HCT116 (cell line): ENCODE measurements at regions of chr4 and their contacts with region 1.

Region 1: DNA sequence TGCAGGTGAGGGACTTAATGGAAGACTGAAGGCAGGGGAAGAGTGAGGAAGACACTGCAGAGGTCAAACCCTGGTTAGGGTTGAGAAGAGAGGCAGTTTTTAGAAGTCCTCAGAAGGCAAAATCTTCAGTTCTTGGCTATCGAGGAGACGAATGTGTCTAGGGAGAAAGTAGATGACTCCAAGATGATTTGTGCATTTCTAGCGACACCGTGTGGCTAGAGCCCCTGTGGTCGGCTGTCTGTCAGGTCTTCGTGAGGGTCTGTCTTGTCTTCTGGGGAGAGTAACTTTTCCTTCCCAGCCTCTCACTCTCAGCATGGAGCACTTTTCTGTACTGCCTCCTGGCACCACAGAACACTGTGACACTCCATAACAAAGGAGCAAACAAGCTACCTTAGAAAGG is 458.1 kb downstream of the STIM2 start:
- DNase-seq: peak; percentile 35
- ATAC-seq: peak; percentile 84
- H3K4me3 ChIP-seq: no peak overlapping the region
- H3K27ac ChIP-seq: no peak overlapping the region
- H3K4me1 ChIP-seq: no peaks in the 10 kb centered on the region
- H3K27me3 ChIP-seq: no peaks in the 10 kb centered on the region
- CTCF ChIP-seq: peak; percentile 33 to 59 (median 50); a peak in 4 of 6 replicates
- POLR2A ChIP-seq: no peak
- RAD21 ChIP-seq: peak; percentile 67

Region 2: GRCh38 chr4:27096142-27096824 is 222.5 kb before region 1 on chr4:
- CTCF ChIA-PET with region 1: no interaction called
- POLR2A ChIA-PET with region 1: no interaction called
- RAD21 ChIA-PET with region 1: no interaction called
- intact Hi-C with region 1: loop called (anchors 2 kb)
- DNase-seq: no peak
- ATAC-seq: no peak
- H3K4me3 ChIP-seq: no peak overlapping the region
- H3K27ac ChIP-seq: no peak overlapping the region
- H3K4me1 ChIP-seq: peaks cover 0 to 7% of the 10 kb centered on the region in 2 experiments; a peak in 1 of 4 replicates
- H3K27me3 ChIP-seq: peaks cover 14% of the 10 kb centered on the region; the same call in 1 of the 2 replicates
- CTCF ChIP-seq: peak in 1 of 3 experiments; percentile 28; a peak in 1 of 6 replicates
- POLR2A ChIP-seq: no peak
- RAD21 ChIP-seq: peak; percentile 54

Region 3: GRCh38 chr4:27176400-27176799 is 142.3 kb before region 1 on chr4:
- CTCF ChIA-PET with region 1: interaction called, 15 read pairs
- POLR2A ChIA-PET with region 1: no interaction called
- RAD21 ChIA-PET with region 1: interaction called in 1 of 2 experiments, 6 read pairs
- intact Hi-C with region 1: loop called (anchors 1 kb)
- DNase-seq: peak; percentile 26
- ATAC-seq: peak; percentile 91
- H3K4me3 ChIP-seq: no peak overlapping the region
- H3K27ac ChIP-seq: no peak overlapping the region
- H3K4me1 ChIP-seq: no peaks in the 10 kb centered on the region
- H3K27me3 ChIP-seq: no peaks in the 10 kb centered on the region
- CTCF ChIP-seq: peak; percentile 41 to 60 (median 42); a peak in 5 of 6 replicates
- POLR2A ChIP-seq: no peak
- RAD21 ChIP-seq: peak; percentile 78